Activated CD4-positive, alpha-beta memory T cell treated with anti-CD3 and anti-CD28 coated beads for 36 hours (primary cell): ENCODE measurements at regions of chr15 and their contacts with region 1.

Region 1: DNA sequence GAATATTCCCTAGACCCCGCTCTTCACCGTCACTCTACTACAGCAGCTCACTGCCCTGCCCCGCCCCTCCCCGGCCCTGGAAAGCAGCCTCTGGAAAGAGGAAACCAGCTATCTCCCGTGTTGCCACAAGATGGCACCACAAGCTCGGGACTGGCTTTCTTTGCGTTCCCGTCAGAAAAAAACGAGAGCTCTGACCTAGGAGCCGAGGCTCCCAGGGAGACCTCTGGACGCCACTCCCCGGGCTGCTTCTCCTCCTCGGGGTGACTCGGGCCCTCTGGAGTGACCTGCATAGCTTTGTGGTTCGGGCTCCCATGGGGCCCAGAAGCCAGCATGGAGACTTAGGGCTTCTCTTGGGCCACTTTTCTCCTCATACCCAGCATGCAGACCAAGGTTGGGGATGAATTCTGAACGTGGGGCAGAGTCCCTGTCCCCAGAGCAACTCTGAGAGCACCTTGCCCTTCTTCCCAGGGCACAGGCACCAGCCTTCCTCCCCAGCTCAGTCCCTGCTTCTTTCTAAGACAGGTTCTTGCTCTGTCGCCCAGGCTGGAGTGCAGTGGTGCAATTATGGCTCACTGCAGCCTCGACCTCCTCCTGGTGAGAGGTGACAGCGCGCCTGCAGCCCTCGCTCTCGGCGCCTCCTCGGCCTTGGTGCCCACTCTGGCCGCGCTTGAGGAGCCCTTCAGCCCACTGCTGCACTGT is 19.0 kb downstream of the STOML1 start:
- DNase-seq: peak; percentile 90
- H3K4me3 Mint-ChIP-seq: peak overlapping the region; percentile 10
- H3K27ac Mint-ChIP-seq: no peak overlapping the region
- H3K4me1 Mint-ChIP-seq: peaks cover 26% of the 10 kb centered on the region
- H3K27me3 Mint-ChIP-seq: peaks cover 19% of the 10 kb centered on the region

Region 2: GRCh38 chr15:73891328-73892315 is 81.5 kb before region 1 on chr15:
- CTCF ChIA-PET with region 1: no interaction called
- POLR2A ChIA-PET with region 1: no interaction called
- intact Hi-C with region 1: no loop called
- DNase-seq: no peak
- H3K4me3 Mint-ChIP-seq: no peak overlapping the region
- H3K27ac Mint-ChIP-seq: no peak overlapping the region
- H3K4me1 Mint-ChIP-seq: no peaks in the 10 kb centered on the region
- H3K27me3 Mint-ChIP-seq: peaks cover 2% of the 10 kb centered on the region

Region 3: GRCh38 chr15:73991726-73992593 is 18.8 kb after region 1 on chr15 and contains the start of gene STOML1:
- CTCF ChIA-PET with region 1: interaction called, 22 read pairs
- POLR2A ChIA-PET with region 1: interaction called, 9 read pairs
- intact Hi-C with region 1: loop called (anchors 2 kb)
- DNase-seq: peak; percentile 97
- H3K4me3 Mint-ChIP-seq: peak within 1 kb of the TSS; percentile 80
- H3K27ac Mint-ChIP-seq: peak within 1 kb of the TSS; percentile 70
- H3K4me1 Mint-ChIP-seq: peaks cover 30% of the 10 kb centered on the region
- H3K27me3 Mint-ChIP-seq: no peaks in the 10 kb centered on the region
- total RNA-seq, gene STOML1: 7.1 to 10.1 TPM

Region 4: GRCh38 chr15:74036271-74037170 is 63.4 kb after region 1 on chr15:
- CTCF ChIA-PET with region 1: interaction called, 90 read pairs
- POLR2A ChIA-PET with region 1: no interaction called
- intact Hi-C with region 1: no loop called
- DNase-seq: no peak
- H3K4me3 Mint-ChIP-seq: no peak overlapping the region
- H3K27ac Mint-ChIP-seq: no peak overlapping the region
- H3K4me1 Mint-ChIP-seq: no peaks in the 10 kb centered on the region
- H3K27me3 Mint-ChIP-seq: no peaks in the 10 kb centered on the region

Region 5: GRCh38 chr15:74053941-74054529 is 80.9 kb after region 1 on chr15:
- CTCF ChIA-PET with region 1: interaction called, 98 read pairs
- POLR2A ChIA-PET with region 1: no interaction called
- intact Hi-C with region 1: loop called (anchors 5 kb)
- DNase-seq: peak; percentile 83
- H3K4me3 Mint-ChIP-seq: no peak overlapping the region
- H3K27ac Mint-ChIP-seq: no peak overlapping the region
- H3K4me1 Mint-ChIP-seq: peaks cover 5% of the 10 kb centered on the region
- H3K27me3 Mint-ChIP-seq: no peaks in the 10 kb centered on the region

Region 6: GRCh38 chr15:74307827-74308644 is 334.9 kb after region 1 on chr15:
- CTCF ChIA-PET with region 1: interaction called, 7 read pairs
- POLR2A ChIA-PET with region 1: no interaction called
- intact Hi-C with region 1: loop called (anchors 5 kb)
- DNase-seq: peak; percentile 49
- H3K4me3 Mint-ChIP-seq: no peak overlapping the region
- H3K27ac Mint-ChIP-seq: no peak overlapping the region
- H3K4me1 Mint-ChIP-seq: no peaks in the 10 kb centered on the region
- H3K27me3 Mint-ChIP-seq: peaks cover 26% of the 10 kb centered on the region